ENCODE measurements at regions of chr16 and their contacts with region 1.

Region 1: GRCh38 chr16:20866145-20866772 is 33.9 kb downstream of the DCUN1D3 start:
- DNase-seq: no peak
- ATAC-seq: no peak
- H3K4me3 ChIP-seq: no peak overlapping the region
- H3K4me3 Mint-ChIP-seq: no peak overlapping the region
- H3K27ac ChIP-seq: no peak overlapping the region
- H3K27ac Mint-ChIP-seq: no peak overlapping the region
- H3K4me1 ChIP-seq: no peaks in the 10 kb centered on the region
- H3K4me1 Mint-ChIP-seq: peaks cover 11% of the 10 kb centered on the region
- H3K27me3 ChIP-seq: no peaks in the 10 kb centered on the region
- H3K27me3 Mint-ChIP-seq: no peaks in the 10 kb centered on the region
- CTCF ChIP-seq: no peak

Region 2: DNA sequence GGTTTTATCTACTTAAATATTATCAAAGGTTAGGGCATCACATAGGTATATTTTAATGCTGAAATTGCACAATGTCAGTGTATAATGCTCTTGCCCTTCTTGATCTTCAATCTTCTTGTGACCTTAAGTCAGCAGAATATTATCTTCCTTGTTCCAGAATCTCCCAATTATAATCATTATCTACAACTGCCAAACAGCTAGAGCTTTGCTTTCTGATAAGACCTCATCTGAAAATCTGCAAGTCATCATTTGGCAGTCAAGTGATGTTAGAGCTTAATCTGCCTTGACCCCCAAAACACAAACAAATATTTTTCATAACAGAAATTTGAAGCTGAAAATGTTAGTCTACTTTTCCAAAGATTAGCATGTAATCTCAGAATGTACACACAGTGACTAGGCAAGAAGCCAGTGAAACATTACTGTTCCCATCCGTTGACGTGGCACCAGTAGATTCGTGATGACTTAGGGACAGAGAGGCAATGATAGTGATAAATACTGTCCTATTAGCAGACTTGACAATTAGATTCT is 40.2 kb before region 1 on chr16:
- CTCF ChIA-PET with region 1: no interaction called
- POLR2A ChIA-PET with region 1: no interaction called
- intact Hi-C with region 1: loop called in 1 of 2 experiments (anchors 1 kb)
- DNase-seq: no peak
- ATAC-seq: no peak
- H3K4me3 ChIP-seq: no peak overlapping the region
- H3K4me3 Mint-ChIP-seq: no peak overlapping the region
- H3K27ac ChIP-seq: no peak overlapping the region
- H3K27ac Mint-ChIP-seq: no peak overlapping the region
- H3K4me1 ChIP-seq: no peaks in the 10 kb centered on the region
- H3K4me1 Mint-ChIP-seq: peaks cover 7% of the 10 kb centered on the region
- H3K27me3 ChIP-seq: no peaks in the 10 kb centered on the region
- H3K27me3 Mint-ChIP-seq: no peaks in the 10 kb centered on the region
- CTCF ChIP-seq: no peak

Region 3: DNA sequence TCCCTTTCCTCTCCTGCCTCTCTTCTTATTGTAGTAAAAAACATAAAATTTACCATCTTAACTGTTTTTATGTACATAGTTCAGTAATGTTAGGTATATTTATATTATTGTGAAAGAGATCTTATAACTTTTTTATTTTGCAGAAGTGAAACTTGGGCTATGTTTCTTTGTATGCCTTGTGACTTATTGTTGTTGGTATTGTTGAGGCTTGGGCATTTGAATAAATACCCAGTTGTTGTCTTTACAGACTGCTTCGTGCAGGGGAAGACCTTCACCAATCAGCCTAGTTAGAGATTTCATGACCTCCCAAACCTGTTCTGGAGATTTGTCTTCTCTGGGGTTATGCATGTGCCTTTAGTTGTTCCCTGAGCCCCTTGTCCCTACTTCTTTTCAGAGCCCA is 28.0 kb before region 1 on chr16:
- CTCF ChIA-PET with region 1: no interaction called
- POLR2A ChIA-PET with region 1: no interaction called
- intact Hi-C with region 1: no loop called
- DNase-seq: no peak
- ATAC-seq: no peak
- H3K4me3 ChIP-seq: no peak overlapping the region
- H3K4me3 Mint-ChIP-seq: no peak overlapping the region
- H3K27ac ChIP-seq: no peak overlapping the region
- H3K27ac Mint-ChIP-seq: no peak overlapping the region
- H3K4me1 ChIP-seq: no peaks in the 10 kb centered on the region
- H3K4me1 Mint-ChIP-seq: peaks cover under 1% of the 10 kb centered on the region
- H3K27me3 ChIP-seq: no peaks in the 10 kb centered on the region
- H3K27me3 Mint-ChIP-seq: no peaks in the 10 kb centered on the region
- CTCF ChIP-seq: no peak

Region 4: GRCh38 chr16:21134053-21134452 is 267.8 kb after region 1 on chr16:
- CTCF ChIA-PET with region 1: no interaction called
- POLR2A ChIA-PET with region 1: no interaction called
- intact Hi-C with region 1: no loop called
- DNase-seq: no peak
- ATAC-seq: no peak
- H3K4me3 ChIP-seq: no peak overlapping the region
- H3K4me3 Mint-ChIP-seq: no peak overlapping the region
- H3K27ac ChIP-seq: no peak overlapping the region
- H3K27ac Mint-ChIP-seq: no peak overlapping the region
- H3K4me1 ChIP-seq: no peaks in the 10 kb centered on the region
- H3K4me1 Mint-ChIP-seq: no peaks in the 10 kb centered on the region
- H3K27me3 ChIP-seq: no peaks in the 10 kb centered on the region
- H3K27me3 Mint-ChIP-seq: peaks cover 7% of the 10 kb centered on the region
- CTCF ChIP-seq: no peak

Measured in CD8-positive, alpha-beta T cell (primary cell).